Posterior vena cava (tissue), 2 donors: ENCODE measurements at regions of chr10 and their contacts with region 1.

Region 1: DNA sequence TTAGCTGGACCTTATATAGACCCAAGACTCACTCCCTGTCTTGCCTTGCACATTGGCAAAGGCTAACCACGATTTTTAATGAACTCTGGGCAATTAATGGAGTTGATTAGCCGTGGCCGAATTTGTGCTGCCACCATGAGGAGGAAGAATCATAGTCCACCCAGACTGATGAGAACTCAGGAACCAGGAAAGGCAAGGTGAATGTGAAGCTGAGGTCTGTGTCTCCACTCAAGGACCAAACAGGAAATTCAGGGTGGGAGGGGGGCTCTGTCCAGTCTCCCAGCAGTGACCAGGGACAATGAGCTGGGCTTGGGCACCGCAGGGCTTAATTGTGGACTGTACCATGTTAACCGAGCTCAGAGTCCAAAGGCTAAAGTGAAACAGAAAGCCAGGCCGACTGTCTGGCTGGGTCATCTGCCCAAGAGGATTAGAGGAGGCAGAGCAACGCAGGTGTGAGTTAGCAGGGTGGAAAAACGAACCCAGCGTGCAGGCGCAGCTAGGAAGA is 127.0 kb upstream of the JCAD start:
- DNase-seq: no peak

Region 2: GRCh38 chr10:28991326-28992270 is 1194.8 kb before region 1 on chr10:
- intact Hi-C with region 1: no loop called
- DNase-seq: no peak

Region 3: DNA sequence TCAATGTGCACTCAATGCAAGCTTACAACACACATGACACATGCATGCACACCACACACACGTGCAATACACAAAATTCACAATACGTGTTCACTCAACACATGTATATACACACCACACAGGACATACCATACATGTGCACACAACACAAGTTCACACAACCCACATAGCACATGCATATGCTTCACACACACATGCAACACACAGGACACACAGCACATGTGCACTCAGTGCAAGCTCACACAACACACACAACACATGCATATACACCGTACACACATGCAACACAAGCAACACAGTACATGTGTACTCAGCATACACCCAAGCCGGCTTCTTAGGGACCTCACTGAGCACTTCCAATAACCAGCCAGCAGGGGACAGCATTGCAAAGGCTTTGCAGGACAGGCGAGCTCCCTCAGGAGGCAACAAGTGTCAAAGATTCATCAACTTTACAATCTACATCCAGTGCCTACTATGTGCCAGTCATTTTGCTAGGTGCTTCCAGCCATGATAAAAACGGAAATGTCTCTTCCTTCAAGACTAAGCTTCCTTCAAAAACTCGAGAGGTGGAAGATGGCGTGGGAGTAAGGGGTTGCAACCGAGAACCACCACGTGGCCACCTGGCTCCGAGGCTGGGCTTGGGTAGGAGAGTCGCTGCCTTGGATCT is 188.1 kb before region 1 on chr10:
- intact Hi-C with region 1: loop called in 1 of 2 experiments (anchors 10 kb)
- DNase-seq: peak; percentile 88

Region 4: DNA sequence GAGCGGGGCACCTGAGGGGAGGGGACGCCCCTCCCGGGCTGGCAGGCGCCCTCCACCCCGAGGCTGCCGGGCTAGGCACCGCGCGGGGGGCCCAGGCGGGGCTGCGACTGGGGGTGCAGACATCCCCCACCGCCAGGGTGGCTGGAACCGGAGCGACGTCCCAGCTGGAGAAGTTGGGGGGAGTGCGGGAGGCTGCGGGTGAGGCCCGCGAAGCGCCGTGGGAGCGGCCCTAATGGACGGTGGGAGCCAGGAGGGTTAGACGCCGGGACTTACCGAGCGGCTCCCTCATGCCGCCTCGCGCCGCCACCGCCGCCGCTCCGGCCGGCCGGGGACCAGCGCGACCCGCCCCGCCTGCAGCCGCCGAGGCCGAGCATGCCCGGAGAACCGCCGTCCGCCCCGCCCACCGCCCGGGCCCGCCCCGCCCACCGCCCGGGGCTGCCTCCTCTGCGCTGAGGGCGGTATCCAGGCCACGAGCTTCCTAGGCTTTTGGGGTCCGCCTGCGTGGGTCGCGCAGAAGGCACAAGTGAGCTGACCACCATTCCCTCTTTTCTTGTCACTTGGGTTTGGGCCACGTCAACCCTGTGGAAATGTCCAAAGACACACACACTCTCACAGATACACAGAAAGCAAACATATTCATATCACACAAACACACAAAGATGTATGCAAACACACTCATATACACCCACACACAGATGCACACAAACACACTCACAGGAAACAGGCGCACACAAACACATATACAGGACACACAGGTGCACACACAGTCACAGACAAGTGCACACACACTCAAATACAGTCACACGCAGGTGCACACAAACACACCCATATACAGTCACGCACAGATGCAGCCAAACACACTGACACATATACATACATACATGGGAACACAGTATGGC is 127.0 kb before region 1 on chr10 and contains the start of gene JCAD:
- intact Hi-C with region 1: loop called in 1 of 2 experiments (anchors 5 kb)
- DNase-seq: peak; percentile 92
- total RNA-seq, gene JCAD: 94.8 to 113 TPM

Region 5: DNA sequence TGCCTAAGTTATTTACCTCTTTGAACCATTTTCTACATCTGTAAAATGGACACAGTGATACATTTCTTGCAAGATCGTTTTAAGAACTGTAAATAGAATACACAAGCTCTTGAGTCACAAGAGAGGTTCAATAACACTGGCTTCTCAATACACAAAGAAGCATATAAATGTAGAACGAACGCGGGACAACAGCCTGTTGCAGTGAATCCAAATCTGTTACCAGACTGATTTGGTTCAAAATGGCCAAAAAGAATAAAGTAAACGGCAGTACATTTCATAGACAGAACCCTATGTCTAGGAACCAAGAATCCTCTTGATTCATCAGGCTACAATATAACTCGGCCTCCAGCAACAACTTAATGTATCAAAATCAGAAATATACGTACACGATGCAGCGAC is 162.0 kb after region 1 on chr10:
- intact Hi-C with region 1: no loop called
- DNase-seq: no peak